RWPE1 (cell line): ENCODE measurements at regions of chr1 and their contacts with region 1.

Region 1: DNA sequence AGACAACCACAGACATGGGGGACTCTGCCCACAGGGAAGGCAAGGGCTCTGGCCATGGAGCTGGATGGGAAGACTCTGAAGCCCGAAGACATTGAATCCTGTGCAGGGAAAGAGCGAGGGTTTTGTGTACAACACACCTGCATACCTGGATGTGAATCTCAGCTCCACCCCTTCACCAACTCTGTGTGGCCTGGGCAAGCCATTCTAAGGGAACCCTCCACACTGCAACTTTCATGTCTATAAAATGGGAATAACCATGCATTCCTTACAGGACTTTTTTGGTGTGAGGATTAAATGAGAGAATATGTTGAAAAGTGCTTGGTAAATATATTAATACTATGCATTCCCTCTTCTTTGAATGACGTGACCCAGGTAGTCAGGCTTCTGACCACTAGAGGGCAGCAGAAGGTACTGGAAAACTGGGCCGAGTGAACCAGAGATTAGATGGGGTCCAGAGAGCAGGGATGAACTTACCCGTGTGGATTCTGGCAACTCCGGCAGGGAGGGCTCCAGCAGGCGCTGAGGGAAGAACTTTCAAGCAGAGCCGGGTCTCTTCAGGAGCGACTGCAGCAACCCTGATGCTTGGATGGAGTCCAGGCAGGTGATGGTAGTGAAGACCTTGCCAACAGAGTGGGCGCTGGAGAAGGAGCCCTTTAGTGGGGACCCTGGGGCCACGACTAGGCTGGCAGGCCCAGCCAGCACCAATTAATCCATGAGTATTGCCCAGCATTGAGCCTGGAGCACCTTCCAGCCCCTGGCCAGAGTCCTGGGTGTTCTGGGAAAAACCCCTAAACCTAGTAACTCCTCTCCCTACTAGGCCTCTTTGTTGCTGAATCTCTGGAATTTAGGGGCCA is 834 bp upstream of the ELF3 start:
- DNase-seq: peak; percentile 95
- H3K27ac ChIP-seq: no peak overlapping the region
- CTCF ChIP-seq: peak; percentile 84

Region 2: DNA sequence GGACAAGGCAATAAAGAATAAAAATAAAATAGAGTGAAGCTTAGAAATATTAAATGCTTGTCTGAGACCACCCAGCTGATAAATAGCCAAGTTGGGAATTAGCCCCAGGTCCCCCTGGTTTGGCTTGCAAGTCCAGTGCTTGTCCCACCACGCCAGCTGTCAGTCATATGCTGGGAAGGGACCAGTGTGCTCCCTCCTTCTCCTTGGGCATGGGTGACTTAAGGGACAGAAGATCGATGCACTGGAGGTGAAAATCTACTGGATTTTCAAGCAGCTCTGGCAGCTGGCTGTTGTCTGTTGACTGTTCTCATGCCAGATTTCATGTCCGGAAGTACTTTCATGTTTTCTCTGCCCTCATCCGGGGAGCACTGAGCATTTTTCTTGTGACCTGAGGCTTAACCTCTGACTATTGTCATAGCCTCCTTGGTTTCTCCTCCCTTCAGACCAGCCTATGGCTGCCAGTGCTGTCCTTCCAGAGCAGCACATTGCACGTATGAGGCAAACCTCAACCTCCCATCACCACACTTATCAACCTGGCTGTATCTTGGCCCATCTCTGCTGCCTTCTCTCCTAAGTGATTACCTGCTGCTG is 75.6 kb before region 1 on chr1:
- CTCF ChIA-PET with region 1: no interaction called
- POLR2A ChIA-PET with region 1: no interaction called
- DNase-seq: no peak
- H3K27ac ChIP-seq: no peak overlapping the region
- CTCF ChIP-seq: no peak

Region 3: GRCh38 chr1:202046227-202046801 is 36.8 kb after region 1 on chr1:
- CTCF ChIA-PET with region 1: interaction called, 11 read pairs
- POLR2A ChIA-PET with region 1: interaction called, 6 read pairs
- DNase-seq: peak; percentile 78
- H3K27ac ChIP-seq: no peak overlapping the region
- CTCF ChIP-seq: no peak

Region 4: DNA sequence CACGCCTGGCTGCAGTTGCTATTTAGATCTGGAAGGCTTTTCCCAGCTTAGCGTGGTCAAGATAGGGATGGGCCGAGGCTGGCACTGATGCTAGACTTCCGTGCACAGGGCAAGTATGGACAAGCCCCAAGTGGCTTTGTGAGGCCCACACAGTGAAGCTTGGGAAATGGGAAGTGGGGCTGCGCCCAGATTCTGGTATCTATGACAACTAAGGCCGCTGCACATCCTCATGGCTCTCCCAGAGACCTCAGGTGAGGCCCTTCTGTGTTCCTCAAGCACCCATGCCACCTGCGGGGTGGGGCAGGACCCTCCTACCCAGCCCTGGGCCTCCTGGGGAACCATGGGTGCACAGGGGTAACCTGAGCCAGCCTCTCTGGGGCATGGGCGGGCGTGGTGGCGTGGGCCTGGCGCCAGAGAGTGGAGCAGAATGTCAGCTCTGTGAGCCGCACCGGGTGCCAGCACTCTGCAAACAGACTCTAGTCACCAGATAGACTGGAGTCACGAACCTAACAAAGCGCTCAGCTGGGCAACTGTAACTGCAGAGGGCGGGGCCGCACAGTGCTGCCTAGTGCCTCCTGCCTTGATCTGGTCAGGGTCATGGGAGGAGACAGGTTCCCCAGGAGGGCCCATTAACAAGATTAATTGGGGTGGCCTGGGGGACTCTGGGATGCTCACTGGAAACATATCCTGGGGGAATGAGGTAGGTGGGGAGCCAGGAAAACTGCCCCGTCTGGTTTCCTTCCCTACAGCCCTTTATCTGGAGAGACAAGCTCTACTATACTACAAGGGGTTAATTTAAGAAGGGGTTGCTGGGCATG is 47.3 kb after region 1 on chr1:
- CTCF ChIA-PET with region 1: interaction called, 5 read pairs
- POLR2A ChIA-PET with region 1: interaction called, 12 read pairs
- DNase-seq: peak; percentile 95
- H3K27ac ChIP-seq: peak overlapping the region; percentile 89
- CTCF ChIP-seq: no peak

Region 5: GRCh38 chr1:202085682-202086404 is 76.3 kb after region 1 on chr1:
- CTCF ChIA-PET with region 1: interaction called, 12 read pairs
- POLR2A ChIA-PET with region 1: interaction called, 6 read pairs
- DNase-seq: no peak
- H3K27ac ChIP-seq: no peak overlapping the region
- CTCF ChIP-seq: no peak

Region 6: GRCh38 chr1:202112839-202113672 is 103.5 kb after region 1 on chr1:
- CTCF ChIA-PET with region 1: interaction called, 114 read pairs
- POLR2A ChIA-PET with region 1: interaction called, 10 read pairs
- DNase-seq: no peak
- H3K27ac ChIP-seq: peak overlapping the region; percentile 72
- CTCF ChIP-seq: no peak

Region 7: DNA sequence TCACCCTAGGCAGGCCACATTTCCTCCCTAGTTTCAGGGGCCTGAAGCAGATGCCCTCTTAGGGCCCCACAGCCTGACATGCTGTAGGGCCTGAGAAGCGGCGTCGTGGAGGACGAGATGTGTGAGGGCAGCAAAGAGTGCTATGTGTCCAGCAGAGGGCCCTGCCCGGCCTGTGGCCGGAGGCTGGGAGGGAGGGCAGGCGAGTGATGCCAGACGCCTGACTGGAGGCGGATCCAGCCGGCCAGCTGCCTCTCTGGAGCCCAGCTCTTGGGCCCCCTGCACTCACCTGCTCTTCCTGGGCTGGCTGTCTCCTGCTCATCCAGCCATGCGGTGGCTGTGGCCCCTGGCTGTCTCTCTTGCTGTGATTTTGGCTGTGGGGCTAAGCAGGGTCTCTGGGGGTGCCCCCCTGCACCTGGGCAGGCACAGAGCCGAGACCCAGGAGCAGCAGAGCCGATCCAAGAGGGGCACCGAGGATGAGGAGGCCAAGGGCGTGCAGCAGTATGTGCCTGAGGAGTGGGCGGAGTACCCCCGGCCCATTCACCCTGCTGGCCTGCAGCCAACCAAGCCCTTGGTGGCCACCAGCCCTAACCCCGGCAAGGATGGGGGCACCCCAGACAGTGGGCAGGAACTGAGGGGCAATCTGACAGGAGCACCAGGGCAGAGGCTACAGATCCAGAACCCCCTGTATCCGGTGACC is 113.2 kb after region 1 on chr1 and contains the start of gene GPR37L1:
- CTCF ChIA-PET with region 1: interaction called, 114 read pairs
- POLR2A ChIA-PET with region 1: interaction called, 7 read pairs
- DNase-seq: no peak
- H3K27ac ChIP-seq: no peak within 1 kb of the TSS
- CTCF ChIP-seq: no peak

Region 8: DNA sequence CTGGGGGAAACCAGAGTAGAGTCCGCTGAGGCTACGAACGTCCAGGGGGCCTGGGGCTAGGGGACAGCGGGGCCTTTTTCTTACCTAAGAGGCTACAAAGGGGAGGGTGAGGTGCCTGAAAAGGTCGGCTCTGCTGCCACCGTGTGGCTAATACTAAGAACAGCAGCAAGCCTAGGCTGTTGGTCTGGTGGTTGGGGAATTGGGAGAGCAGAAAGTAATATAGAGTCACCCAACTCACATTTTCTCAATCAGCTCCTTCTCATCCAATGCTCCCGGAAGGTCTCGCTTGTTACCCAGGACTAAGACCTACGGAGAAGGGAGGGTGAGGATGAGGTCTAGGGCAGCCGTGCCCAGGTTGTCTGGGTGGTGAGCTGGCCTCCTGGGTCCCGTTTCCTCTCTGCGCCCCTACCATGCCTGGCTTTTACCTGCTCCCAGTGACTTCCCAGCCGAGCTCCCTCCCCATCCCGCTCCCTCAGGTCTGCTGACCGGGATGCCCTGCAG is 125.7 kb after region 1 on chr1:
- CTCF ChIA-PET with region 1: interaction called, 13 read pairs
- POLR2A ChIA-PET with region 1: interaction called, 4 read pairs
- DNase-seq: peak; percentile 94
- H3K27ac ChIP-seq: peak overlapping the region; percentile 85
- CTCF ChIP-seq: peak; percentile 86

Region 9: DNA sequence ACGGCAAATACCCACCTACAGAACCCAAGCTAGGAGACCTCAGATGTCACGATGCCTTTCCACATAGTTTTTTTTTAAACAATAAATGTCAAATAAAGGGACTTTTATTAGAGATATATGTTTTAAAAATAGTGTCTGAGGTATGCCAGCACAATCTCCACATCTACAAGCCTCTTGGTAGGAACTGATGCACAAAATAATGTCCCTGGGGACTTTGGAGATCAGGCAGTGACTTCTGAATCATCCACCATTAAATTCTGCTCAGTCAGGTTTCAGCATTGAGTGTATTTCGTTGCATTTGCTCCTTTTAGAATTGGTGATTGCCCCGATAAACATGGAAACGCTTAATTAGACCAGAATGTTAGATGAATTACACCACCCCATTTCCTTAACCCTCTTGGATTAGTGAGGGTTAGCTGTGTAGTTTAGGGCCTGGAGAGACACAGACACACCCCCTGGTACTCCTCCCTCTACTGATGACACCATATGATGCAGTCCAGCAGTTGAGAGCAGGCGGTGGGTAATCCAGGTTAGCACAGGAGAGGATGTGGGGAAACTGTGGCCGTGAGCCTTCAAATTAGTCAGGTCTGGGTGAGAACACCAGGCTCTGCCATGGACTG is 217.6 kb after region 1 on chr1:
- CTCF ChIA-PET with region 1: no interaction called
- POLR2A ChIA-PET with region 1: no interaction called
- DNase-seq: no peak
- H3K27ac ChIP-seq: no peak overlapping the region
- CTCF ChIP-seq: no peak